Heart right ventricle (tissue), 16 donors: ENCODE measurements at regions of chr14 and their contacts with region 1.

Region 1: DNA sequence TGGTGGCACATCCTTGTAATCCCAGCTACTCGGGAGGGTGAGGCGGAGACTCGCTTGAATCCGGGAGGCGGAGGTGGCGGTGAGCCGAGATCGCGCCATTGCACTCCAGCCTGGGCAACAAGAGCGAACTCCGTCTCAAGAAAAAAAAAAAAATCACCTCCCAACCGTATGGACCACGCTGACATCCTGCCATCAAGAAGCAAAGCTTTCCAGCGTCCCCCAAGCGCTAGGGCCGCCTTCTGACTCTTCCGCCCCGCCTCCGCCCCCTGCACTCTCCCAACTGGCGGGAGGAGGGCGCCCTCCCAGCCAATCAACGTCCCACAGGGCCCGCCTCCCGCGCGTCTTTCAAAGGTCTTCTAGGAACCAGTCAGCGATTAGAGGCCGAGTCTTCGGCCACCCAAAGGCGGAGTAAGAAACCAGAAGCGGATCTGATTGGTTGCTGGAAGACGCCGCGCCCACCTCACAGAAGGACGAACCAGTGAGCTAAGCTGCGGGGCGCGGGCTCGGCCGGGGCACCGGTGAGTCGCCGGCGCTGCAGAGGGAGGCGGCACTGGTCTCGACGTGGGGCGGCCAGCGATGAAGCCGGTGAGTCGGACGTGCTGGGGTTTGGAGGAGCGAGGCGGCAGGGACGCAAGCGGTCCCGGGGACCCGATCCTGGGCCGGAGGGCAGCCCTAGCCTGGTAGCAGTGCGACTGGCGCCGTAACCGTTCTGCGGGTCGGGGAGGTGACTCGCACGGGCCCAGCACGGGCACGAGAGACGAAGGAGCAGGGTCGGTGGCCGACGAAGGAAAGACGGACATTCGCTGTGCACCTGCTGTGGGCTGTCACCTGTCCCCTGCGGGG is at the start of gene CDKN3:
- DNase-seq: peak; percentile 97 to 98
- ATAC-seq: peak; percentile 98 to 99 (median 99)
- H3K4me3 ChIP-seq: peak within 1 kb of the TSS; percentile 56 to 95 (median 75)
- H3K27ac ChIP-seq: peak within 1 kb of the TSS in 6 of 10 donors; percentile 26 to 75 (median 40)
- H3K4me1 ChIP-seq: peaks cover 0 to 27% (median 9%) of the 10 kb centered on the region in 9 donors
- H3K27me3 ChIP-seq: no peaks in the 10 kb centered on the region
- CTCF ChIP-seq: peak; percentile 27 to 82 (median 66)
- total RNA-seq, gene CDKN3: 1.8 to 14.7 (median 4.2) TPM

Region 2: GRCh38 chr14:54220071-54220703 is 176.5 kb before region 1 on chr14:
- intact Hi-C with region 1: no loop called
- DNase-seq: peak; percentile 25 to 49
- ATAC-seq: peak in 7 of 8 donors; percentile 73 to 93 (median 83)
- H3K4me3 ChIP-seq: peak overlapping the region in 9 of 10 donors; percentile 19 to 48 (median 27)
- H3K27ac ChIP-seq: peak overlapping the region in 5 of 10 donors; percentile 5 to 65 (median 39)
- H3K4me1 ChIP-seq: peaks cover 0 to 16% (median 8%) of the 10 kb centered on the region in 9 donors
- H3K27me3 ChIP-seq: peaks cover 0 to 69% (median 54%) of the 10 kb centered on the region in 7 donors
- CTCF ChIP-seq: no peak

Region 3: GRCh38 chr14:54440873-54441868 is 44.5 kb after region 1 on chr14 and contains the start of gene CNIH1:
- intact Hi-C with region 1: loop called in 1 of 10 experiments (anchors 2 kb)
- DNase-seq: peak; percentile 92 to 93
- ATAC-seq: peak; percentile 98 to 99 (median 99)
- H3K4me3 ChIP-seq: peak within 1 kb of the TSS; percentile 45 to 82 (median 63)
- H3K27ac ChIP-seq: peak within 1 kb of the TSS; percentile 78 to 97 (median 90)
- H3K4me1 ChIP-seq: peaks cover 0 to 54% (median 25%) of the 10 kb centered on the region in 9 donors
- H3K27me3 ChIP-seq: no peaks in the 10 kb centered on the region
- CTCF ChIP-seq: peak; percentile 90 to 99 (median 95)
- total RNA-seq, gene CNIH1: 80.7 to 108 (median 91.4) TPM